Breast epithelium (tissue), 4 donors: ENCODE measurements at regions of chr4 and their contacts with region 1.

Region 1: GRCh38 chr4:94605241-94605805 is 152.4 kb upstream of the BMPR1B start:
- DNase-seq: no peak
- H3K4me3 ChIP-seq: no peak overlapping the region
- H3K27ac ChIP-seq: no peak overlapping the region
- H3K4me1 ChIP-seq: no peaks in the 10 kb centered on the region
- H3K27me3 ChIP-seq: no peaks in the 10 kb centered on the region
- CTCF ChIP-seq: no peak
- POLR2A ChIP-seq: no peak

Region 2: DNA sequence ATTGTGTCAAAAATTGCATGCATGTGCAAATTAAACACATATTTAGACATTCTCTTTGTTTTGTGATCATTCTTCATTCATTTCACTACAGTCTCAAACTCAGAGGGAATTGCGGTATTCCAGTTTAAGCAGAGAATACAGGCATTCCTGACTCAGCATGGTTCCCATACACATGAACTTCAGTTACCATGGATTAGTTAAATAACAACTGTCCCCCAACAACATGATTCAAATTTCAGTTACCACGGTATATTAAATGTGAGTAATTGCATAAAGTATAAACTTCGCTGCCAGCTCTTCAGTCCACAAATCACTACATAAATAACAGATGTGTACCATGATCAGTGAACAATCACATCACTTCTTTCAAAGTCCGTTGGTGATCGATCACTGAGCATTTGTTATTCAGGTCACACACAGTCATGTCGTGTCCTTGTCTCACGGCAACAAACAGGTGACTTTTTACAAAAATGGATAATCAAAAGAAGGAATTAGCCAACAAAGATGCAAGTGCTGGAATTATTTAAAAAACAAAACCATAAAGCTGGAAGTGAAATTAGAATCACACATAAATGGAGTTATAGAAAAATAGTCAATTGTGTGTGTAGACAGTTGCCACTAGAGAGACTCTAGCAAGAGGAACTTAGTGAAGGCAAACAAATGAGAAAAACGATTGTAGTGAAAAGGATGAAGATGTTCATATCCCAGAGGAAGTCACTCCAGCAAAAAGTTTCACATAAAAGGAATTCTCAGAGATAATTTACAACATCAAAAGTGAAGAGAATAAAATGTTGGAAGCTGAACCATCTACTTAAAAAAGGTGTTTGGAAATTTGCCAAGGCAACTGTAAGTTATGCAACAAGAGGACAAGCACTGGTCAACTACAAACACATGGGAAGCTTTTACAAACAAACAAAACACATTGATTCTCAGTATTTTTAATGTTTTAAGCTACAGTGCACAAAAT is 536.3 kb before region 1 on chr4:
- intact Hi-C with region 1: loop called (anchors 10 kb)
- DNase-seq: no peak
- H3K4me3 ChIP-seq: no peak overlapping the region
- H3K27ac ChIP-seq: no peak overlapping the region
- H3K4me1 ChIP-seq: no peaks in the 10 kb centered on the region
- H3K27me3 ChIP-seq: no peaks in the 10 kb centered on the region
- CTCF ChIP-seq: no peak
- POLR2A ChIP-seq: no peak

Region 3: DNA sequence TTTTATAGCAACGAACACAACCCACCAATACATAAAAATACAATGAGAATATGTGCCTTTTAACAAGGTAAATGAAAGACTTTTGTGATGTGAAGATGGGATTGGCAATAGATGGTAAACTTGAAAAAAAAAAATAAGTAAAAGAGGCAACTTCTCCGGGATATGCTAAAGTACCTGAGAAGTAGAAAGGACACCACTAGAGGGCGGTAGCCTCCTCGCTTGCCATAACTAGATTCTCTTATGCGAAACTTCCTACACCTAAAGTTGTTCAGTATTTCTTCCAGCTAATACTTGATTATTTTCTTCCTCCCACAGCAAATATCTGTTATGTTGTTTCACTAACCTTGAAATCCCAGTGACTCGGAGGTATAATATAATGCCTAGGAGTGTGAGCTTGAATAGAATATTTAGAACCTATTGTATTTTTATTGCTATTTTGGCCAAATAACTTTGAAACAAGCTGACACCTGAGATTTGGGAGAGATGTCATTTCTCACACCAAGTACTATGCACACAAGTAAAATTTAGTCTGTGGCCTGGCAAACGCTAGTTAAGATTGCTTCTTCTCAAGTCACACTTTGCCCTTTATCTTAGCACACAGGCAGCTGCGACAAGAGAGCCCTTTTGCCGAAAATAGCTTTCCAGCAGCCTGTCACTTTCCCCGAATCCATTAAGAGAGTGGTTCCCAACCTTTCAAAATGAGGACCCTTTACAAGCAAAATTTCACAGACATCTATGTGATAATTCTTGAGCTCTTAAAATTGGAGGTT is 198.5 kb before region 1 on chr4:
- intact Hi-C with region 1: loop called (anchors 5 kb)
- DNase-seq: peak in 1 of 2 donors; percentile 62
- H3K4me3 ChIP-seq: no peak overlapping the region
- H3K27ac ChIP-seq: no peak overlapping the region
- H3K4me1 ChIP-seq: no peaks in the 10 kb centered on the region
- H3K27me3 ChIP-seq: no peaks in the 10 kb centered on the region
- CTCF ChIP-seq: peak in 2 of 3 donors; percentile 64 to 69
- POLR2A ChIP-seq: no peak